ENCODE measurements at regions of chr6 and their contacts with region 1.

Region 1: DNA sequence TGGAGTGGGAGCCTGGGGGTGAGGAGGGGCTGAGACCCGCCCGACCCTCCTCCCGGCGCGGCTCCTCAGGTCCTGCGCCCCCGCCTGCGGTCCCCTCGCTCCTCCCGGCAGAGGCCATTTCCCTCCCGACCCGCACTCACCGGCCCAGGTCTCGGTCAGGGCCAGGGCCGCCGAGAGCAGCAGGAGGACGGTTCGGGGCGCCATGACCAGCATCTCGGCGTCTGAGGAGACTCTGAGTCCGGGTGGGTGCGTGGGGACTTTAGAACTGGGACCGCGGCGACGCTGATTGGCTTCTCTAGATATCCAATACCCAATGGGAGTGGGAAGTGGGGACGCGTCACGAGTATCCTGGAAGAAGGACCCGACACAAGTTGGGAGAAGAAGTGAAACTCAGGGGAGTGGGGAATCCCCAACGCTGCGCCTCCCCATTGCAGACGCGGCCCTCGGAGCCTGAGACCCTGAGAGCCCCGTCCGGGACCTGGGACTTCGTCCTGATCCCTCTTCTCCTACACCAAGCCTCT is at the start of gene HLA-B:
- DNase-seq: peak; percentile 65 to 95
- H3K4me3 ChIP-seq: peak within 1 kb of the TSS; percentile 60
- CTCF ChIP-seq: no peak
- POLR2A ChIP-seq: no peak
- total RNA-seq, gene HLA-B: 1,061 to 2,090 (median 1,325) TPM

Region 2: DNA sequence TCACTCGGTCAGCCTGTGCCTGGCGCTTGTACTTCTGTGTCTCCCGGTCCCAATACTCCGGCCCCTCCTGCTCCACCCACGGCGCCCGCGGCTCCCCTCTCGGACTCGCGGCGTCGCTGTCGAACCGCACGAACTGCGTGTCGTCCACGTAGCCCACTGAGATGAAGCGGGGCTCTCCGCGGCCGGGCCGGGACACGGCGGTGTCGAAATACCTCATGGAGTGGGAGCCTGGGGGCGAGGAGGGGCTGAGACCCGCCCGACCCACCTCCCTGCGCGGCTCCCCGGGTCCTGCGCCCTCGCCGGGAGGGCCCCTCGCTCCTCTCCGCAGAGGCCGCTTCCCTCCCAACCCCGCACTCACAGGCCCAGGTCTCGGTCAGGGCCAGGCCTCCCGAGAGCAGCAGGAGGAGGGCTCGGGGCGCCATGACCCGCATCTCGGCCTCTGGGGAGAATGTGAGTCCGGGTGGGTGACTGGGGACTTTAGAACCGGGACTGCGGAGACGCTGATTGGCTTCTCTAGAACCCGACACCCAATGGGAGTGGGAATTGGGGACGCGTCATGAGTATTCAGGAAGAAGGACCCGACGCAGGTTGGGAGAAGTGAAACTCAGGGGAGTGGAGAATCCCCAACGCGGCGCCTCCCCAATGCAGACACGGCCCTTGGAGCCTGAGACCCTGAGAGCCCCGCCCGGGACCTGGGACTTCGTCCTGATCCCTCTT is 85.2 kb before region 1 on chr6 and contains the start of gene HLA-C:
- intact Hi-C with region 1: loop called (anchors 10 kb)
- DNase-seq: peak; percentile 95 to 98
- H3K4me3 ChIP-seq: peak within 1 kb of the TSS; percentile 63
- CTCF ChIP-seq: no peak
- POLR2A ChIP-seq: no peak
- total RNA-seq, gene HLA-C: 387 to 776 (median 534) TPM